ENCODE measurements at regions of chr7 and their contacts with region 1.

Region 1: DNA sequence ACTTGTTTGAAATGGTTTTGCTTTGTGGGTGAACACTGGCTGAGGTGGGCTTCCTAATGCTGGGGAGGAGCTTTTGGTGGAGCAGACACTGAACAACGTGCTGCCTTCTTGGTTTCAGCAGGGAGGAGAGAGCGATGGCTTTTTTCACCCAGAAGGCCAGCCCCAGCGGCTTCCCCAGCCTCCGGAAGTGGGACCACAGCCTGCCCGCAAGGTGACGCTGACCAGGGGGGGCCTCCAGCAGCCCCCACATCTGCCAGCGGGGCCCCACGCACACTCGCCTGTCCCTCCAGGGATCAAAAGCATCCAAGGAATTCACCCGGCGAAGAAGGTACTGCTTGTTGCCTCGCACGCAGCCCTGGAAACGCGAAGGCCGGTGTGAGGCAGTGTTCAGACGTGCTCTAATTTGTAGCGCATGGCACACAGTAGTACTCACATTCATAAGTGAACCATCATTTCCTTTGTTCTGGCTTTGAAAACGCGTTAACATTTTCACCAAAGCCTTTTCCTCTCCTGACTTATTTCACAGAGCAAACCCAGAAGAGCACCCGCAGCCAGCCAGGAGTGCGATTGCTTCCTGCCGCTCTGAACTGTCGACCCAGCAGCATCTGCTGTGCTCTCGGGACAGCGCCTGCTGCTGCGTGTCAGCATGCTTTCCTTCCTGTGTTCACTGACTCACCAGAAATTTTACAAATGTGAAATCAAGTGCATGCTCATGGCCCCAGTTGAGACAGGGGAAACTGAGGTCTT is 48.4 kb downstream of the SHH start:
- DNase-seq: peak; percentile 49 to 76
- ATAC-seq: peak; percentile 79 to 81 (median 81)
- H3K4me3 ChIP-seq: peak overlapping the region; percentile 1
- H3K4me3 Mint-ChIP-seq: peak overlapping the region; percentile 88
- H3K27ac ChIP-seq: peak overlapping the region; percentile 68
- H3K27ac Mint-ChIP-seq: peak overlapping the region; percentile 93 to 97
- H3K4me1 ChIP-seq: peaks cover 33% of the 10 kb centered on the region
- H3K4me1 Mint-ChIP-seq: peaks cover 57 to 69% of the 10 kb centered on the region in 2 donors
- H3K27me3 ChIP-seq: no peaks in the 10 kb centered on the region
- H3K27me3 Mint-ChIP-seq: no peaks in the 10 kb centered on the region
- CTCF ChIP-seq: no peak

Region 2: GRCh38 chr7:155371884-155372781 is 391.7 kb before region 1 on chr7:
- intact Hi-C with region 1: loop called (anchors 10 kb)
- DNase-seq: peak in 1 of 2 donors; percentile 24
- ATAC-seq: peak in 2 of 3 donors; percentile 48 to 66
- H3K4me3 ChIP-seq: no peak overlapping the region
- H3K4me3 Mint-ChIP-seq: no peak overlapping the region
- H3K27ac ChIP-seq: no peak overlapping the region
- H3K27ac Mint-ChIP-seq: no peak overlapping the region
- H3K4me1 ChIP-seq: peaks cover 35% of the 10 kb centered on the region
- H3K4me1 Mint-ChIP-seq: peaks cover 14 to 27% of the 10 kb centered on the region in 2 donors
- H3K27me3 ChIP-seq: peaks cover 41% of the 10 kb centered on the region
- H3K27me3 Mint-ChIP-seq: peaks cover 44 to 61% of the 10 kb centered on the region in 2 donors
- CTCF ChIP-seq: peak; percentile 18

Region 3: GRCh38 chr7:155598810-155599210 is 165.1 kb before region 1 on chr7:
- intact Hi-C with region 1: loop called (anchors 1 kb)
- DNase-seq: peak; percentile 80 to 86
- ATAC-seq: peak; percentile 87 to 94 (median 91)
- H3K4me3 ChIP-seq: no peak overlapping the region
- H3K4me3 Mint-ChIP-seq: no peak overlapping the region
- H3K27ac ChIP-seq: no peak overlapping the region
- H3K27ac Mint-ChIP-seq: no peak overlapping the region
- H3K4me1 ChIP-seq: peaks cover 7% of the 10 kb centered on the region
- H3K4me1 Mint-ChIP-seq: peaks cover 5 to 9% of the 10 kb centered on the region in 2 donors
- H3K27me3 ChIP-seq: peaks cover 5% of the 10 kb centered on the region
- H3K27me3 Mint-ChIP-seq: peaks cover 31% of the 10 kb centered on the region in 2 donors
- CTCF ChIP-seq: peak; percentile 95

Region 4: GRCh38 chr7:155724327-155725005 is 39.4 kb before region 1 on chr7:
- intact Hi-C with region 1: loop called (anchors 5 kb)
- DNase-seq: peak in 1 of 2 donors; percentile 16
- ATAC-seq: no peak
- H3K4me3 ChIP-seq: no peak overlapping the region
- H3K4me3 Mint-ChIP-seq: no peak overlapping the region
- H3K27ac ChIP-seq: peak overlapping the region; percentile 35
- H3K27ac Mint-ChIP-seq: peak overlapping the region in 1 of 2 donors; percentile 33
- H3K4me1 ChIP-seq: peaks cover 3% of the 10 kb centered on the region
- H3K4me1 Mint-ChIP-seq: peaks cover 44 to 55% of the 10 kb centered on the region in 2 donors
- H3K27me3 ChIP-seq: no peaks in the 10 kb centered on the region
- H3K27me3 Mint-ChIP-seq: no peaks in the 10 kb centered on the region
- CTCF ChIP-seq: no peak

Region 5: DNA sequence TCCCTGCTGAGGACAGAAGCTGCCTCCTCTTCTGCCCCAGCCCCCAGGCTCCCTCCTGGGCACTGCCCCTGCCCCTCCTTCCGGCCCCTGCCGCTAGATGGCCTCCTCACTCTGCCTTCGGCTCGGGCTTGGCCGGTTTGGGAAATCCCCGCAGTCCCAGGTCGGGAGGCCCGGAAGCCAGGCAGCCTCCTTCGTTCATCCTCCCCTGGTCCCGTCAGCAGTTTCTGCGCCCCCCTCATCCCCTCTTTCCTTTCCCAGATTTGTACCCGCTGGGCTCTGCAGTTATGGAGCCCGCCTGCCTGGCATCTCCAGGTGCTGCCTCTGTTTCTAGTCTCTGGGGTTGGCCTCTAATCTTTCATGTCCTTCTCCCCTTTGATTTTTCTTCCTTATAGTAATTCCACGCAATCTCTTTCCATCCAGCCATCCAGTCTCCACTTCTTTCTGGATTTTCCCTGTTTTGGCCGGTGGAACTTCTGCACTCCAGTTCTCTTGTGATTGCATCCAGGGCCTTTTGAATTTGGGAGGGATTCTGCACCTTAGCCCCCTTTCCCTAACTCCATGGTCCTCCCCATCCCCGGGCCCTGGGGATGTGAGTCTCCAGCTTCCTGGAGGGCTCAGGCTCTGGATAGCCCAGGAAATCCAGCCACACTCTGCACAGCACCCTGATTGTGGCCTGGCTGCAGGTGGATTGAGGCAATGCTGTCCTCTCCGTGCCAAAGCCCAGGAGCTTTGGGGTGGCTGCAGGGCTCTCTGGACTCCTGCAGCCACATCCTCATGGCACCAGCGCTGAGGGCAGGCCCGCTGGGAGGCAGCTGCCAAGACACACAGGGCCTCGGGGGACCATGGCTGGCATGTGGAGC is 51.7 kb after region 1 on chr7:
- intact Hi-C with region 1: no loop called
- DNase-seq: peak in 1 of 2 donors; percentile 71
- ATAC-seq: peak in 1 of 3 donors; percentile 74
- H3K4me3 ChIP-seq: no peak overlapping the region
- H3K4me3 Mint-ChIP-seq: no peak overlapping the region
- H3K27ac ChIP-seq: no peak overlapping the region
- H3K27ac Mint-ChIP-seq: no peak overlapping the region
- H3K4me1 ChIP-seq: peaks cover 5% of the 10 kb centered on the region
- H3K4me1 Mint-ChIP-seq: peaks cover 6 to 14% of the 10 kb centered on the region in 2 donors
- H3K27me3 ChIP-seq: peaks cover 11% of the 10 kb centered on the region
- H3K27me3 Mint-ChIP-seq: peaks cover 40% of the 10 kb centered on the region in 2 donors
- CTCF ChIP-seq: no peak

Measured in natural killer cell (primary cell).